ENCODE measurements at regions of chr7 and their contacts with region 1.

Region 1: DNA sequence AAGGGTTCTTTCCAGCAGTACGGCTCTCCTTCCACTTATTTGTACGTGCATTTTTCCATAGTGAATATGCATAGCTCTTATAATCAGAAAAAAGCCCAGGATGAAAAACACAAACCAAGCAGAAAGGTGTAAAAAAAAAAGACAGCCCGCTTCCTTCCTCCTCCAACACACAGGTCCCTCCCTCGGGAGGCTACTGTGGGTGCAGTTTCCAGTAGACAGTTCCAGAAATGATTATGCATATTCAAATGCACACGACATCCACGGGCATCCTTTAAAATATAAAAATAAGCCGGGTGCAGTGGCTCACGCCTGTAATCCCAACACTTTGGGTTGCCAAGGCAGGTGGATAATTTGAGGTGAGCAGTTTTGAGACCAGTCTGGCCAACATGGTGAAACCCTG is 59.9 kb downstream of the TNRC18 start:
- DNase-seq: no peak
- ATAC-seq: peak; percentile 38; the same call in 2 of the 3 replicates
- H3K4me3 ChIP-seq: peak overlapping the region; percentile 16; the same call in 1 of the 2 replicates
- H3K27ac ChIP-seq: no peak overlapping the region
- H3K4me1 ChIP-seq: peaks cover 16% of the 10 kb centered on the region
- H3K27me3 ChIP-seq: no peaks in the 10 kb centered on the region
- CTCF ChIP-seq: no peak
- EP300 ChIP-seq: no peak
- POLR2A ChIP-seq: no peak
- RAD21 ChIP-seq: no peak

Region 2: GRCh38 chr7:5441840-5442503 is 78.2 kb after region 1 on chr7:
- CTCF ChIA-PET with region 1: interaction called, 60 read pairs
- POLR2A ChIA-PET with region 1: no interaction called
- RAD21 ChIA-PET with region 1: interaction called, 4 read pairs
- SMC1A ChIA-PET with region 1: interaction called, 6 read pairs
- in situ Hi-C with region 1: no loop called
- intact Hi-C with region 1: no loop called
- DNase-seq: no peak
- ATAC-seq: no peak
- H3K4me3 ChIP-seq: no peak overlapping the region
- H3K27ac ChIP-seq: no peak overlapping the region
- H3K4me1 ChIP-seq: no peaks in the 10 kb centered on the region
- H3K27me3 ChIP-seq: no peaks in the 10 kb centered on the region; a peak in 2 of 4 replicates
- CTCF ChIP-seq: no peak
- EP300 ChIP-seq: no peak
- POLR2A ChIP-seq: no peak
- RAD21 ChIP-seq: no peak

Measured in GM12878 (cell line).